Left lung (tissue), 14 donors: ENCODE measurements at regions of chr3 and their contacts with region 1.

Region 1: DNA sequence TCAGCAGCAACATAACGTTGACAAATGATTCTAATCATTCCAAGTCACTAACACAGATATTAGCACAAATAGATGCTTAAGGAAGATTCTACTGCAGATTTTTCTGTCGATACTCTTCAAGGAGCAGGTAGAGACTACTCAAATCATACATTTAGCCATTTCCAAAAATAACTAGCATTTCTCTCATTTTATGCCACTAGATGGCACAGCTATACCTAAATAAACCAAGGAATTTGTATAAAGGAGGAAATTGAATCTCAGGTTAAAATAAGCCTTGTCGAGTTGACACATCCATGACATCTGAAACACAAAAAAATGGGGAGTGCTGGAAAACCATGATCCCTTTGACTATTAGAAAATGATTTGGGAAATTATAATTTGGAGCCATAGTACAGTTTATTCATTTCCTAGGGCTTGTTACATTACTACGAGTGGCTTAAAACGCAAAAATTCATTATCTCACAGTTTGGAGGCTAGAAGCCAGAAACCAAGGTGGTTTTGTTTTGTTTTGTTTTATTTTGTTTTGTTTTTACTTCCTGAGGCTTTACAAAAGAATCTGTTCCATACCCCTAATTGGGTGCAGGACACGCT is 59.5 kb upstream of the STRIT1 start:
- DNase-seq: peak in 1 of 4 donors; percentile 45
- ATAC-seq: peak; percentile 85
- H3K4me3 ChIP-seq: no peak overlapping the region
- H3K27ac ChIP-seq: no peak overlapping the region
- H3K4me1 ChIP-seq: no peaks in the 10 kb centered on the region
- H3K27me3 ChIP-seq: no peaks in the 10 kb centered on the region
- CTCF ChIP-seq: peak in 1 of 2 donors; percentile 29

Region 2: DNA sequence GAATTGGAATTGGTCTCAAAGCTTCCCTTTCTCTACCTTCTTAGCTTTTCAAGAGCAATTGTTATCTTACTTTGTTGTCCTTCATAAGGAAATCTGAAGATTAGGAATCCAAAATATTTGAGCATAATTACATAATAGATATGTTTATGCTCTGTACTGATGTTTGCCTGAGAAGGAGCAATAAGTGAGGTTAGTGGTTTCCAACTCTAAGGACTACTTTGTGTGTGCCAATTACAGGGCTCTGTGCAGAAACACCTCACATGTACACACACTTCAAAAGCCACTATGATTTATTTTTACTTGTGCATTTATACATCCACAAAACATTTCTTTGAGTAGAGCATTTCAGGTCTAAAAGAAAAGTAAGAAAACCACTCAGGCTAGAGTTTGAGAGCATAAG is 223.0 kb before region 1 on chr3:
- intact Hi-C with region 1: no loop called
- DNase-seq: no peak
- ATAC-seq: no peak
- H3K4me3 ChIP-seq: no peak overlapping the region
- H3K27ac ChIP-seq: no peak overlapping the region
- H3K4me1 ChIP-seq: no peaks in the 10 kb centered on the region
- H3K27me3 ChIP-seq: no peaks in the 10 kb centered on the region
- CTCF ChIP-seq: no peak

Region 3: GRCh38 chr3:155701882-155702465 is 349.0 kb after region 1 on chr3:
- intact Hi-C with region 1: loop called in 1 of 2 experiments (anchors 10 kb)
- DNase-seq: peak in 2 of 4 donors; percentile 41 to 60
- ATAC-seq: peak; percentile 92
- H3K4me3 ChIP-seq: no peak overlapping the region
- H3K27ac ChIP-seq: peak overlapping the region in 1 of 2 donors; percentile 29
- H3K4me1 ChIP-seq: peaks cover 6 to 7% of the 10 kb centered on the region in 2 donors
- H3K27me3 ChIP-seq: no peaks in the 10 kb centered on the region
- CTCF ChIP-seq: peak; percentile 52 to 71

Region 4: GRCh38 chr3:156433138-156433537 is 1080.1 kb after region 1 on chr3:
- intact Hi-C with region 1: no loop called
- DNase-seq: no peak
- ATAC-seq: no peak
- H3K4me3 ChIP-seq: no peak overlapping the region
- H3K27ac ChIP-seq: no peak overlapping the region
- H3K4me1 ChIP-seq: no peaks in the 10 kb centered on the region
- H3K27me3 ChIP-seq: no peaks in the 10 kb centered on the region
- CTCF ChIP-seq: no peak